GM10248 (cell line): ENCODE measurements at regions of chr10 and their contacts with region 1.

Region 1: GRCh38 chr10:100872034-100872791 is 40.5 kb upstream of the SLF2 start:
- DNase-seq: peak; percentile 85
- CTCF ChIP-seq: peak; percentile 29

Region 2: DNA sequence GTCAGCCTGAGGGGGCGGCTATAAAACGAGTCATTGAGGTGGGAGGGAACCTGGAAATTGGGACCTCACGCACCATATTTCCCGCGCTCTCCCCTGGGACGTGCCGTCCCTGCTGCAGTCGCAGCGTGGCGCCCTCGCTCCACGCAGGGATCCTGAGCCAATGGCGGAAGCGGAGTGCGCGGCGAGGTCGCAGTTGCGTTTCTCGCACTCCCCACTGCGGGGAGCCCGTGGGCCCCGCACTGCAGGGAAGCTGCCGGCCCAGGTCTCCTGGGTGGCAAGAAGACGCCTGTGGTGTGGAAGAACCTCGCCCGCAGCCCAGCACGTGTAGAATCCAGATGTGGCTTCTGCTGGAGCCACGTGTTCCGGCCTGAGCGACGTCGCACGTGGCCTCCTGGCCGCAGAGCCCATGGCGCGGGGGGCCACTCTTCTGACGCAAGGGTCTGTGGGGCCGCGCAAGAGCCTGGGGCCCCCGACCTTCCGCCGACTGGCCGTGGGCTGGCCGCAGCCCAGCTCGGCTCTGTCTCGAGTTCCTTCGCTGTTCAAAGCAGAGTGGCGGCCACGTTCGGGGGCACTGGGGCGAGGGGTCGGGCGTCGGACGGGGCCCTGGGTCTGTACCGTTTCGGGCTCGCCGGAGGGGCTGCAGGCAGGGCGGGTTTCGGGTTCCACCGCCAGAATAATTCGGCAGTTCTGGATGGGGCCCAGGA is 310.1 kb before region 1 on chr10:
- CTCF ChIA-PET with region 1: interaction called, 28 read pairs
- POLR2A ChIA-PET with region 1: no interaction called
- DNase-seq: peak; percentile 84
- CTCF ChIP-seq: peak; percentile 87

Region 3: GRCh38 chr10:100670828-100671479 is 201.3 kb before region 1 on chr10:
- CTCF ChIA-PET with region 1: interaction called, 15 read pairs
- POLR2A ChIA-PET with region 1: no interaction called
- DNase-seq: peak; percentile 87
- CTCF ChIP-seq: peak; percentile 86

Region 4: DNA sequence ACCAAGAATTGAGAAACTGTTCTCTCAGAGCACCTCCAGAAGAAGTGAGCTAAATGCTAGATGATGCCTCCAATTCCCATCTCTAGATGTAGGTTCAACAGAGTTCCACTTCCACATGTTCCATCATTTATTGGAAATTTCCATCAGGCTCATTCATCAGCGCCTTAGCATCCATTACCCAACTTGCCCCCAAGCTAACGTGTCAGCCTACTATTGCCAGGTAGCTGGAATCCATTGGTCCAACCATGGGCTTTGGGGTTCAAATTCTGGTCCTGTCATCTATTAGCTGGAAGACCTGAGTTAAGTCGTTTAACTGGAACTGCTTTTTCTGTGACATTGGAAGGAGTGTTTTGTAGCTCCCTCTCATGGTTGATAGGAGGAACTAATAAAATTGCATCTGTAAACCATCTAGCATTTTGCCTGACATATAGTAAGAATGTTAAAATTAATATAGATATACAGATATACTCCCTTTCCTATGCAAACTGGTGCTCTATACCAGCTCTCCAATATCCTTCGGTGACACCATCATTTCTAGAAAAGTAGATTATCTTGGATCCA is 16.7 kb after region 1 on chr10:
- CTCF ChIA-PET with region 1: interaction called, 16 read pairs
- POLR2A ChIA-PET with region 1: no interaction called
- DNase-seq: no peak
- CTCF ChIP-seq: peak; percentile 27

Region 5: GRCh38 chr10:100917071-100917470 is 44.9 kb after region 1 on chr10:
- CTCF ChIA-PET with region 1: no interaction called
- POLR2A ChIA-PET with region 1: no interaction called
- DNase-seq: no peak
- CTCF ChIP-seq: no peak